Posterior cingulate gyrus (tissue), 11 donors: ENCODE measurements at regions of chr13 and their contacts with region 1.

Region 1: DNA sequence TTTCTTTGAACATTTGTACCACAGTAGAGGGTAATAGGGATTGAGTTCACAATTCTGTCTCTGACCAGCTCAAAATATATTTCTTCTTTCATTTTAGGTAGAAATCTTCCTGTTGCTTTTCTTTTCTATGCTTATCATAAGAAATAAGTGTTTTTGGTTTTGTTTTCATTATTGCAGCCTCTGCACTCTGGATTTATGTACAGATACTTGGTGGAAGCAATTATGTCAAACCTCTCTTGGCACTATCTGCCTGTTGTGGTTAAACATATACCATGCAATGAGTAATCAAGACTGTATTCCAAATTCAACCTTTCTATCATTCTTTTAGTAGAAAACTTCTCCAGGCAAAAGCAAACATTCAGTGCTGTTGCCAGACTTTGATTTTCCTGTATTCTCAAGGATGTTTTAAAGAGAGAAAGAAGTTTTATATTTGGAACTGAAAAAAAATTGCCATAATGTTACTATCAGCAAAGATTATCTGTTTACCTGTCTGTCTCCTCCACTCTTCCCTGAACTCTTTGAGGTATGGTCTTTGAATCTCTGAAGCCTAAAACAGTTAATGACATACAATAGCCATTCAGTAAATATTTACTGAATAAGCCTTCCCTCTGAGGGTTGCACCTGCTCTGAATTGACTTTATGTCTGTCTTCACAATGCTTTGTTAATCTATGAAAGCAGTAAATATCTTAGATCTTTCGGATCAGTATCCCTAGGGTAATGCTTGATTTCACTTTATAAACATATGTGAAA is 612.5 kb upstream of the PRR20A start:
- DNase-seq: no peak

Region 2: DNA sequence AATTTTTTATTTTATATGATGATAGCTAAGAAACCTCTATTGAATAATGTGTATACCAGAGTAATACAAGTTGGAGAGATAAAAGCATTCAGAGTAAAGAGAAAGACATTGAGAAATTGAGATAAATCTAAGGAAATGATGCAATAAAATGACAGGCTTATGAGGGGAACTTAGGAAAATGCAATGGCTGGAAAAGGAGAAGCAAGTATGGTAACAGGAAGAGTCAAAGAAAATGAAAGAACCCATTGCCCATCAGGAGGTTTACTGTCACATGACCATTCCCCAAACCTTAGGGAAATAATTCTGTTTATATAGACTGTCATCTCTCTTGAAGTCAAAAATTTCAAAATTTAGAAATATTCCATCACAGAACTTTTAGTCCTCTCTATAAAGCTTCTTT is 195.5 kb before region 1 on chr13:
- intact Hi-C with region 1: loop called (anchors 10 kb)
- DNase-seq: no peak

Region 3: DNA sequence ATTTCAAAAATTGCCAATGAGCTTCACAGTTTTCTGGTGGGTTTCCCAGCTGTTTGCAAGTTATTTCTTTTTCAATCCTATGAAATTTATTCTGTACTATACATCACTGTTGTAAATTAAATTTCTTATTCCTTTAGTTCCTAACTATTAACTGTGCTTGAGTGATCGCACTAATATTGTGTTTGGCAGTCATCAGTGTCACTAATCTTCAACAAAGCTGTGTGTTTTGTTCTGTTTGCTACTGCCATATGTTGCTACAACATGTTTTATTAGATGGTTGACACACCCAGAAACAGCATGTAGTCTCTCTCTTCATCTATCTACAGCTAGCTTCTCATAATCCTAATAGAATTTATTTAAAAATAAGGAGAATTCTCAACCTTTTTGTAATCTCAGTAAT is 158.9 kb after region 1 on chr13:
- intact Hi-C with region 1: no loop called
- DNase-seq: no peak